ENCODE measurements at regions of chr19 and their contacts with region 1.

Region 1: DNA sequence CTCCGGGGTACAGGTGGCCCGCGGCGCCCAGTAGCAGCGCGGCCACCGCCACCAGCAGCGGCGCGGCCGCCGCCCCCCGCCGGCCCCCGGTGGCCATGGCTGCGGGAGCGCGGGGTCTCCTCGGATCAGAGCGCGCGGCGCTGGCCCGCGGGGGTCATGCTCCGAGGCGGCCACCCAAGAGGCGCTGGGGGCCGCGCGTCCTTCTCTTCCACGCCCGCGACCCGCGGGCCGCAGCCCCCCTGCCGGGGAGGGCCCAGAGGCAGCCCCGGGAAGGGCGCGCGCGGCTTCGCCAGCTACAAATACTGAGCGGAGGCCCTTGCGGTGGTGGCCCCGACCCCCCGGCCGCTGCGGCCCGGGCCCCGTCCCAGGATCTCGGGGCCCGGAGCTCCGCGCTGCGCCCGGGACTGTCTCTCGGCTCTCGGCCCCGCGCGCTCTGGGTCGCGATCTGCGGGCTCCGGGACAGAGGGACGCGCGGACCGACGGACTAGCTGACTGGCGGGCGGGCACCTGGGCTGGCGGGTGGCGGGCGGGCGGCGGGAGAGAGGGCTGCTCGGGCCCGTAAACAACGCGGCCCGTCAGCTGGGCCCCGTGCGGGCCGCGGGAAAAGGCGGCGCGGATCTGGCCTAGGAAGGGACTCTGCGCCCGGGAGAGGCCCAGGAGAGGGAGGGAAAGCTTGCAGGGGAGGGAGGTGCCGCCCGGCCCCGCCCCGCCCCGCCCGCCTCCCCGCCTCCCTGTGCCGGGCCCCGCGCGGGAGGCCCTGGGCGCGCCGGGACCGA is at the start of gene INSR:
- DNase-seq: peak; percentile 87
- H3K4me3 ChIP-seq: peak within 1 kb of the TSS; percentile 99 to 100
- H3K27ac ChIP-seq: peak within 1 kb of the TSS; percentile 90
- H3K4me1 ChIP-seq: no peaks in the 10 kb centered on the region
- H3K27me3 ChIP-seq: no peaks in the 10 kb centered on the region
- CTCF ChIP-seq: no peak
- POLR2A ChIP-seq: peak; percentile 73
- total RNA-seq, gene INSR: 51.2 to 124 TPM

Region 2: DNA sequence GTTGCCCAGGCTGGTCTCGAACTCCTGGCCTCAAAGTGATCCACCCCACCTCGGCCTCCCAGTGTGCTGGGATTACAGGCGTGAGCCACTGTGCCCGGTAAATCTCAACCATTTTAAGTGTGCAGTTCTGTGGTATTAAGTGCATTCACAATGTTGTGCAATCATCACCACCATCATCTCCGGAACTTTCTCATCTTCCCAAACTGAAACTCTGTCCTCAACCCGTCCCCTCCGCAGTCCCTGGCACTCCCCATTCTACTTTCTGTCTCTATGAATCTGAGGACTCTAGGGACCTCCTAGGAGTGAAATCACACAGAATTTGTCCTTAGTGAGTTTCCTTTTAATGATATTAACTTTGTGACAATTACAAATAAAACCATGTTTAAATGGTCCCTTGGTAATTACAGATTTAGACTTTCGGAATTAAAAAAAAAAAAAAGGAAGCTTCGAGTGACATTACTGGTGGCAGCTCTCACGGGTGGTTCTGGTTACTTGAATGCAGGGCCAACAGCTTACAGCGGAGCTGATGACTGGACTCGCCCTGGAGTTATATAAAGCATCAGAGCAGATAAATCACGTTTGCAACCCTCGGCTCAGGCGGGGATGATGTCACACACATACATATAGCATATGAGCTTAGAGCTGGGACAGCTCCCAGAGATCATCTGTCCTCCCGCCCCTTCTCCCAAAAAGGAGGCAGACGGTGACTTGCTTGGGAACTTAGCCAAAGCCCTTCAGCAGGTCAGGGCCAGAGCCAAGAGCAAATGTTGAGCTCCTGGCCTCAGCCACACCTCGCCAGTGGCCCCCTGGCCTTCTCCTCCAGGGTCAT is 134.7 kb before region 1 on chr19:
- intact Hi-C with region 1: loop called (anchors 2 kb)
- DNase-seq: no peak
- H3K4me3 ChIP-seq: no peak overlapping the region
- H3K27ac ChIP-seq: no peak overlapping the region
- H3K4me1 ChIP-seq: no peaks in the 10 kb centered on the region
- H3K27me3 ChIP-seq: no peaks in the 10 kb centered on the region
- CTCF ChIP-seq: no peak
- POLR2A ChIP-seq: no peak

Region 3: DNA sequence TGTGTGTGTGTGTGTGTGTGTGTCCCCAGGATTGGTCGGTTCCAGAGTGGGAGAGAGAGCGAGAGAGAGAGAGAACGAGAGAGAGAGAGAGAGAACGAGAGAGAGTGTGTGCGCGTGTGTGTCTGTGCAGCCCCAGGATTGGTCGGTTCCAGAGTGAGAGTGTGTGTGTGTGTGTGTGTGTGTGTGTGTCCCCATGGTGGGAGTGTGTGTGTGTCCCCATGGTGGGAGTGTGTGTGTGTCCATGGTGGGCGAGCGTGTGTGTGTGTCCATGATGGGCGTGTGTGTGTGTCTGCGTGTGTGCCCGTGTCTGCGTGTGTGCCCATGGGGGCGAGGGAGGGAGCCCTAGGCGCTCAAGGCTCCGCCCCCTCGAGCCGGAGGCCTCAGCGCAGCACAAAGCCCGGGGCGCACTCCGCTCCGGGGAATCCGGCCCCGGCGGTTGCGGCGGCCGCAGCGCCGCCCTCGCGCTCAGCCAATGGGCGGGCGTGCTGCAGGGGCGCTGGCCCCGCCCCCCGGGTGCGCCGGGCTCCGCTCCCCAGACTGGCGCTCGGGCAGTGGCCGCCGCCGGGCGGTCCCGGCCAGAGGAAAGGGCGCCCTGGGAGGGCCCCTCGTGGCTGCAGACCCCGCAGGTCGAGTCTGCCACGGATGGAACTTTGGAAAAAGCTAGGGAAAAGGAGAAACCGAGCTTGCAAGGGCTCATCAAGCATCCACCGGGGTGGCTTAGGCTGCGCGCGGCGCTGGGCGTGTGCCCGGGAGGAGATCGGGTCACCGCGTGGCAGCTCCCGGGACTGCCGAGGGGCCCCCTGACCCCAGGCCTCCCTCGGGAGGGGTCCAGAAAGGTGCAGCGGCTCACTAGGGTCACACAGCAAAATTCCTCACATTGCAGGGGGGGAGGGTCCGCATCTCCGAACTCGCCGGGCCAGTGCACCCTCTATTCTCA is 96.0 kb before region 1 on chr19:
- intact Hi-C with region 1: loop called (anchors 1 kb)
- DNase-seq: peak; percentile 90
- H3K4me3 ChIP-seq: peak overlapping the region; percentile 54 to 72
- H3K27ac ChIP-seq: peak overlapping the region; percentile 83 to 86
- H3K4me1 ChIP-seq: no peaks in the 10 kb centered on the region
- H3K27me3 ChIP-seq: no peaks in the 10 kb centered on the region
- CTCF ChIP-seq: peak in 2 of 4 experiments; percentile 27 to 32
- POLR2A ChIP-seq: peak; percentile 62

Measured in prostate gland (tissue), 2 donors.